Dendritic cell treated with granulocyte-macrophage colony-stimulating factor and Interleukin-4, amounts not matched to agents 40 ng/mL and 50 ng/mL, for 4 days (primary cell): ENCODE measurements at regions of chrX and their contacts with region 1.

Region 1: DNA sequence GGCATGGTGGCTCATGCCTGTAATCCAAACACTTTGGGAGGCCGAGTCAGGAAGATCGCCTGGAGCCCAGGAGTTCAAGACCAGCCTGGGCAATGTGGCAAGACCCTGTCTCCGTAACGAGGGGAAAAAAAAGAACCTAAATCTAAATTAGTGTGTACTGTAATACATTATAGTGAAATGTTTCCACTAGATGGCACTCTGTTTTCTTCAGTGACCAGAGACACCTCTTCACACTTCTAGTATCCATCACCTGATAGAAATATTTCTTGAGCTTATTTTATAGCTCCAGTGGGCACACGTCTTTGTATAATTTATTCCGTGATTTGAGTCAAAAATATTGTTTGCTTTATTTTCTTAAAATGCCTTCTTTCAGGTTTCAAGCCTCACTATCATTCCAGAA is 600.9 kb upstream of the DIPK2B start:
- H3K4me3 Mint-ChIP-seq: no peak overlapping the region
- H3K27ac Mint-ChIP-seq: no peak overlapping the region
- H3K4me1 Mint-ChIP-seq: peaks cover 23% of the 10 kb centered on the region
- H3K27me3 Mint-ChIP-seq: peaks cover 5% of the 10 kb centered on the region

Region 2: GRCh38 chrX:45758319-45758718 is 43.2 kb before region 1 on chrX:
- intact Hi-C with region 1: loop called (anchors 10 kb)
- H3K4me3 Mint-ChIP-seq: peak overlapping the region; percentile 61
- H3K27ac Mint-ChIP-seq: peak overlapping the region; percentile 79
- H3K4me1 Mint-ChIP-seq: peaks cover 20% of the 10 kb centered on the region
- H3K27me3 Mint-ChIP-seq: peaks cover 9% of the 10 kb centered on the region

Region 3: GRCh38 chrX:45849253-45849862 is 47.8 kb after region 1 on chrX:
- intact Hi-C with region 1: loop called (anchors 5 kb)
- H3K4me3 Mint-ChIP-seq: no peak overlapping the region
- H3K27ac Mint-ChIP-seq: no peak overlapping the region
- H3K4me1 Mint-ChIP-seq: peaks cover 7% of the 10 kb centered on the region
- H3K27me3 Mint-ChIP-seq: peaks cover 20% of the 10 kb centered on the region

Region 4: GRCh38 chrX:46408553-46409407 is 607.2 kb after region 1 on chrX:
- intact Hi-C with region 1: loop called (anchors 2 kb)
- H3K4me3 Mint-ChIP-seq: no peak overlapping the region
- H3K27ac Mint-ChIP-seq: no peak overlapping the region
- H3K4me1 Mint-ChIP-seq: no peaks in the 10 kb centered on the region
- H3K27me3 Mint-ChIP-seq: no peaks in the 10 kb centered on the region